ENCODE measurements at regions of chr1 and their contacts with region 1.

Region 1: DNA sequence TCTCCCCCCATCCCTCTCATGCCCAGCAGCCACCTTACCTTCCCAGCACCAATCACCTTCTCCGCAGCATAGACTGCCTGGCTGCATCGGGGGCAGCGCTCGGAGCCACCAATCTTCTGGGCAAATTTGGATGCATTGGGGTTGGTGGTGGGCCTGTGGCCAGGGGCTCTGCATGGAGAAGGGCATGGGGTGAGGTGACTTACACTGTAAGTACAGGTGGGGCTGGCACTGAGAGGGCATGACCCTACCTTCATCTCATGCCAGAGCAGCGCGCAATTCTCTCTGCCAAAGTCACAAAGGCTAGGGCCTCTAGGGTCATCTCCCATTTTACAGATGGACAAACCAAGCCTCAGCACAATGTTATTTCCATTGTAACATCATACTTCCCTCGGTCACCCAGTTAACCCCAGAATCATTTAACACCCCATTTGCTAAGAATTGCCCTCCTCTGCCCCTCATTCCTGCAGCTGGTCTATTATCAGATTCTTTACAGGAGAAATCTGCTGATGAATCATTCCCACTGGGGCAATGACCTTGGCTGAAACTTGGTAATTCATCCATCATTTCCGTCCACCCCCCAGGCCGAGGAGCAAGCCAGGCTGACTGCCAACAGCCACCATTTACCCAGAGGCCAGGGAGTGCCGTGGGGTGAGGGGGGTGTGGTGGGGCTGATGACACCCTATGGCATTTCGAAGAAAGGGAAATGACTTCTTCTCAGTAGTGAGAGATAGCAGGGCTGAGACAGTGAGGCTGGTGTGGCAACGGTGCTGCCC is 17.9 kb downstream of the CSRP1 start:
- DNase-seq: no peak
- H3K4me3 Mint-ChIP-seq: no peak overlapping the region
- H3K27ac Mint-ChIP-seq: no peak overlapping the region
- H3K4me1 Mint-ChIP-seq: peaks cover 10% of the 10 kb centered on the region
- H3K27me3 Mint-ChIP-seq: no peaks in the 10 kb centered on the region

Region 2: DNA sequence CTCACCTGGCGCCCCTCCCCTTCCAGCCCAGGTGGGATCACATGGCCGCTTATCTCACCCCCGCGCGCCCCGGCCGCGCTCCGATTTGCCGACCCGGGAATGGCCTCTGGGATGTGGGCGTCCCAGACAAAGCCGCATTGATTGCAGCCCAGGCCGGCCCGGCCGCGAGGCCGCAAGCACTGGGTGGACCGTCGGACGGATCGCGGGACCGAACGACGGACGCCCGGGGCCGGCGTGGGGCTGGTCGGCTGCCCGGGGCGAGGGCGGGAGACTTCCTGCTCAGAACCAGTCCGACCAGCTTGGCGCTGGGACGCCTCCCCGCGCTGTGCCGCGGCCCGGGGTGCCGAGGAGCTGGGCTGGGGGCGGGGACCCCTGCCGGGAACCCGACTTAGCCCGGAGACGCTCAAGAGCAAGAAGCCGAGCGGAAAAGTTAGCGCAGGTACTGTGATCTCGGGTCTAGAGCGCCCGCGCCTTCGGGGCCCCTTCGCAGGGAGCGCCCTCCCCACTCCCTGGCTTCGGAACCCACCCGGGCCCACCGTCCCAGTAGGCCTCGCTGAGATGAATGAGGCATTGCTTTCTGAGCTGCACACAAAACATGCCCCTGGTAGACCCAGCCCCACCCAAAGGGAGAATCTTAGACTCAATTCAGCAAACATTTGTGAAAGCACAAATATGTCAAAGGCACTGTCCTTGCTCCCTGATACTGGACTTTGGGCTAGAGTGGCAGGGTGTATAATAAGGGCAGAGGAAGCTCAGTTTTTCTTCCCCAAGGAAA is 89.5 kb before region 1 on chr1:
- CTCF ChIA-PET with region 1: no interaction called
- POLR2A ChIA-PET with region 1: no interaction called
- DNase-seq: no peak
- H3K4me3 Mint-ChIP-seq: no peak overlapping the region
- H3K27ac Mint-ChIP-seq: no peak overlapping the region
- H3K4me1 Mint-ChIP-seq: no peaks in the 10 kb centered on the region
- H3K27me3 Mint-ChIP-seq: peaks cover 35% of the 10 kb centered on the region

Region 3: DNA sequence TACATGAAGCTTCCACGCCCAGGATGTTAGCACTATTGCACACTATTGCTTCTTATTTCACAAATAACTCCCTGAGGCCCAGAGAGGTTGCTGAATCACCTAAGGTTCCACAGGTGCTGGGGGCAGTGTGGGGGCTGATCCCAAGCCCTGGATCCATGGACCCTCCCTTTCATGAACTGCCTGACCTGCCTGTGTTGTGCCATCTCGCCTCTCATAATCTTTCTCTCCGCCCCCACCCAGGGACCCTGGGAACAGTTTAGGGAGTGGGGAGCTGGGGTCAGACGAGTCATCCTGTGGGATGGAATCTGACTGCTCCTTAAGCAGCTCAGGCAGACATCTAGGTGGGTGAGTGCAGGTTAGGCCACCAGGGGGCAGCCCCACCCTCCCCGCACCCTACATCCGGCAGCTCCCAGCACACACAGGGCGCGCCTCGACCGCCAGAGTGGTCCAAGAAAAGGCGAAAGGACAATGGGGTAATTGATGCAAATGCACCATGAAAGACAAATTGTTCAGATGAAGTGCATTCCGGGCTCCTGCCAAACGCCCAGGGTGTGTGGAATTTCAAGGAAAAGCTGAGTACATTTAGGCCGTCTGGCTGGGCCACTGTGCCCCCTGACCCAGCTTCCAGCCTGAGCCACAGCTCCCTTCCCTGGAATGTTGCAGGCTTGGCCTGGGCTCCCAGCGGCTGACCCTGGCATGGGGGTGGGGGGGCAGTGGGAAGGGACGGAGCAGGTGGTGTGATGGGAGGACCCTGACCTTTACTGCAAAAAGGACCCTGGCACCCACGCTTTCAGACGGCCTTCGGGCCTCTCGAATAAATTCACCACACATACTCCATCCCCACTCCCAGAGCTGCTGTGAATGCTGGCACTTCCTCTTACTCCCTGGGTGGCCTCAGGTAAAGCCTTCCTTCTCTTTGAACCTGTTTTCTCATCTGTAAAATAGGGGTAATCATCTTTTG is 40.8 kb before region 1 on chr1:
- CTCF ChIA-PET with region 1: interaction called, 153 read pairs
- POLR2A ChIA-PET with region 1: interaction called, 3 read pairs
- DNase-seq: peak; percentile 78
- H3K4me3 Mint-ChIP-seq: no peak overlapping the region
- H3K27ac Mint-ChIP-seq: no peak overlapping the region
- H3K4me1 Mint-ChIP-seq: peaks cover 37% of the 10 kb centered on the region
- H3K27me3 Mint-ChIP-seq: peaks cover 25% of the 10 kb centered on the region

Region 4: GRCh38 chr1:201506556-201507359 is 17.8 kb after region 1 on chr1 and contains the start of gene CSRP1:
- CTCF ChIA-PET with region 1: interaction called, 350 read pairs
- POLR2A ChIA-PET with region 1: interaction called, 18 read pairs
- DNase-seq: peak; percentile 89
- H3K4me3 Mint-ChIP-seq: peak within 1 kb of the TSS; percentile 93
- H3K27ac Mint-ChIP-seq: peak within 1 kb of the TSS; percentile 82
- H3K4me1 Mint-ChIP-seq: peaks cover 62% of the 10 kb centered on the region
- H3K27me3 Mint-ChIP-seq: no peaks in the 10 kb centered on the region
- total RNA-seq, gene CSRP1: 77.1 to 77.8 TPM

Region 5: DNA sequence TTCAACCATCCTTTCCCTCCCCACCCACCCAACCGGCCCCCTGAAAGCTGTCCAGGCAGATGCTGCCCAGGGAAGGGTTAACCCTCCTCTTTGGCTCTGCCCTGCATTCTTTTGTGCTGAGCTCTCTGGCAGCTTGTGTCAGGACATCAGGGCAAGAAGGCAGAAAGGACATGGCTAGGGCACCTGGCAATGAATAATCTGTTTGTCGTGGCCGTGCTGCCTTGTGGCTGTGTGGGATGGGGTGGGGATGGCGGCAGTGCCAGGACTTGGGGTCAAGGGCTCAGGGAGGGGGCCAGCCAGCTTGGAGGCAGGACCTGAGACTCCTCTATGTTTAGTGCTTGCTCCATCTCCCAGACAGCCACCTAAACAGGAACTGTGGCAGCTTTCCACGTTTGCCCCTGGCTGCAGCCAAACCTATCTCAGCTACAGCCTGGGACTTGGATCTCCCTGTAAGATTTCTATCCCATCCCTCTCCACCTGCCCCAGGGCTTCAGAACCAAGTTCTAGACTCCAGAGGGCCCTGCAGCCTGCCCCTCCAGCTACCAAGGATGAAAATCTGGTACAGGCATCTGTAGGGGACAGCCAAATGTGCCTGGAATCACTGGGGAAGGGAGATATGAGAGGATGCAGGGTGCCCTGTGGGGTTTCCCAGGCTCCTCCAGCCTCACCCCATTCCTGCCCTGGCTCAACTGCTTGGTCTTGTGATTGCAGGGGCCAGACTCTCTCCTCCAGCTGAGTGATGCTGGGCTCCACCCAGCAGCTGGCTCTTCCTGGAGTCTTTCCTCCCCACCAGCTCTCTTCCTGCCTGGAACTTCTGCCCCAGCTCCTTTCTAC is 624.1 kb after region 1 on chr1:
- CTCF ChIA-PET with region 1: no interaction called
- POLR2A ChIA-PET with region 1: no interaction called
- DNase-seq: no peak
- H3K4me3 Mint-ChIP-seq: no peak overlapping the region
- H3K27ac Mint-ChIP-seq: no peak overlapping the region
- H3K4me1 Mint-ChIP-seq: no peaks in the 10 kb centered on the region
- H3K27me3 Mint-ChIP-seq: no peaks in the 10 kb centered on the region